Left ventricle myocardium superior (tissue), 1 donor: ENCODE measurements at regions of chr5 and their contacts with region 1.

Region 1: GRCh38 chr5:59673438-59674058 is 220.0 kb downstream of the PDE4D start:
- DNase-seq: no peak
- ATAC-seq: no peak

Region 2: DNA sequence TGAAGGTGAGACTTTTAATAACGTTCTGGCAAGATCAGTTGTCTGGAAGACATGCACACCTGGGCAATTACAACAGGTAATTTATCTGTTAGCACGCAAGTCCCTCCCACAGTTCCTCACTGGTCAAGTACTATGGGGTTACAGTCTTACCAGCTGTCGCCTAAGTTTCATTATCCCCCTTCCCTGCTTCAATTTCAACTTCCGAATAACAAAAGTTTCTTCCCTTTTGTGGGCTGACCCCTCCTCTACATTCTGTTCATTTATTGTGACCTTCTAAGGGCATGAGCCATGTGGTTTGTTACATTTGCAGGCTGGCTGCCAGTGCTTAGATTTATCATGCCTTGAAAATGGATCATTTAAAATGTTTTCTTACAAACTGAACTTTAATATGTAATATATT is 1165.8 kb before region 1 on chr5:
- intact Hi-C with region 1: no loop called
- DNase-seq: no peak
- ATAC-seq: no peak

Region 3: GRCh38 chr5:59390074-59390659 is 283.4 kb before region 1 on chr5:
- intact Hi-C with region 1: loop called (anchors 2 kb)
- DNase-seq: no peak
- ATAC-seq: no peak

Region 4: DNA sequence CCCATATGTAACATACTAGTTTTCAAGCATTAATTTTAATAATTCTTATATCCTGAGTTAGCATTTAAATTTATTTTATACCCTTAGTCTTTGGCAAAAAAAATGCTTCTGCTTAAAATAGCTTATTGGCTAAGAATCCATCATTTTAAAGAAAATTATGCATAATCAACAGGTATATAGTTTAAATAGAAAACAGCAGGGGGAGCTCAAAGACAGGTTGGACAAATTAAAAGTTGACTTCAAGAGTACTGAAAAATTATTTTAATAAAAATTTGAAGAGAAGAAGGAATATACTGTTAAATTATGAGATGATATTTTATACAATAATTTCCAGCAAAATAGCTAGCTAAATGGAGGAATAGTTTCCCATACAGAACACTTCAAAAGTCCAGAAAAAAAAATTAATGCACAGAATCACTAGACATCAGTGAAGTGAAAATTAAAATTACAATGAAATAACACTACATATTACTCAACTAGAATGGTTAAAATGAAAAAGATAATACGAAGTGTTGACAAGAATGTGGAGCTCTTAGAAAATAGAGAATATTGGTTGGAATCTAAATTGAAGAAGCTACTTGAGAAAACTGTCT is 167.2 kb before region 1 on chr5:
- intact Hi-C with region 1: loop called (anchors 1 kb)
- DNase-seq: no peak
- ATAC-seq: no peak

Region 5: DNA sequence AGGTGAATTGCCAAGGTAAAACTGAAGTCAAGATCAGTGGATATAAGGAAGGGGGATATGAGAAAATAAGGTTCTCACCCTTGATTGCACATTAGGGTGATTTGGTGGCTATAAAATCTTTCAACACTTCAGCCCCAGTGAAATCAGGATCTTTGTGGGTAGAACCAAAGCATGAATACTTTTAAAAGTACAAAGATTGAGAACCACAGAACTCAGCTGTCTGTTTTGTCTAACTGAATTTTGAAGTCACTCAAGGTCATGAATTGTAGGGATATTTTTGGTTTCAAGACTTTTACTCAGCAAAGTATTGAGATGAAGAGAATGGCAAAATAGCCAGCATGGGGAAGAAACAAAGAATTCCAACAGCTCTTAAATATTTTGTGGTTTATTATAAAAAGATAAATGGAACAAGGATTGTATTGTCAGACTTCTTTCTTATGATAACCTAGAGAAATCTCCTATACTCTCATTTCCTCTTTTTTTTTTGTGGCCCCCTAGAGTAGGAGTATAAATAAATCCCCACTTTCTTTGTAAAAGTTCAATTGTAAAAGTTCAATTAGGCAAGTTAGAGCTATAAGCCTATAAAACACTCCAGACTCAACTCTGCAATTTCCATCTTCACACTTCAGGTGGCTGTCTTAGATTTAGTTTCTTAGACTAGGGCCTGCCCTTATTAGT is 52.9 kb before region 1 on chr5:
- intact Hi-C with region 1: no loop called
- DNase-seq: no peak
- ATAC-seq: no peak

Region 6: GRCh38 chr5:59799668-59800346 is 126.3 kb after region 1 on chr5:
- intact Hi-C with region 1: loop called (anchors 10 kb)
- DNase-seq: no peak
- ATAC-seq: peak; percentile 75

Region 7: DNA sequence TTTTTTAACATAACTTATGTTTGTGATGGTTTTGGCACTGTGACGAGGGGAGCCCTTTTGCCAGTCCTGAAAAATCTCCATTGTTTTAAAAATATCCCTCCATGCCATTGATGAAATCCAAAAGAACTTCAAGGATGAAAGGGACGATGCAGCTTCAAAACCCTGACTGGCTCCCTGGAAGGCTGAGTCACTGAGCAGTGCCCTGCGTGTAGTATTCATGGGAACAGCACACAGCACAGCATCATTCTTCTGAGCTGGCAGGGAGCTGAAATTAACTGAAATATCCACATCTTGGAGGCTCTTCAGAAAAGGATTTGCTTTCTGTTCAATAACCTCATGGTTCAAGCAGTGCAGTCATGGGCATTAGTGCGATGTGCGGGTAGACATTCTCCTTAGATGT is 190.2 kb after region 1 on chr5:
- intact Hi-C with region 1: no loop called
- DNase-seq: no peak
- ATAC-seq: no peak

Region 8: GRCh38 chr5:59923465-59923864 is 249.9 kb after region 1 on chr5:
- intact Hi-C with region 1: no loop called
- DNase-seq: no peak
- ATAC-seq: no peak